Colonic mucosa (tissue), 4 donors: ENCODE measurements at regions of chr10 and their contacts with region 1.

Region 1: GRCh38 chr10:23702977-23703414 is 264.1 kb downstream of the OTUD1 start:
- DNase-seq: peak; percentile 46
- H3K4me3 ChIP-seq: no peak overlapping the region
- H3K27ac ChIP-seq: no peak overlapping the region
- H3K4me1 ChIP-seq: no peaks in the 10 kb centered on the region
- H3K27me3 ChIP-seq: no peaks in the 10 kb centered on the region
- CTCF ChIP-seq: peak; percentile 67

Region 2: DNA sequence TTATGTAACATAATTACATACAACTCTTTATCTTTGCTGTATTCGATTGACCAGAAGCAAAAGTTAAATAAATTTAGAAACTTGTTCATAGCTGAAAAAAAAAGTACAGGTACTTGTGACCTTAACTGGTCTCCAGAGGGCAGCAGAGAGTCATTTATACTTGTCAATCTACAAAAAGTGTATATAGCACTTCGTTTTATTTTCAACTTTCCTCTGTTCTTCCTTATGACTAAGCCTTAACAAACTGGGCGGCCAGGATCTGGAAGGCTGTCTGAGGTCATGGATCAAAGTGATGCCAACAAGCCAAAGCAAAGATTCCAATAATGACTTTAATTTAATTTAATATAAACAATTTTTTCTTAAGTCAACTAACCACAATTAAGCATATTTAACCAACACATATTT is 388.2 kb before region 1 on chr10:
- intact Hi-C with region 1: loop called (anchors 2 kb)
- DNase-seq: peak; percentile 63
- H3K4me3 ChIP-seq: no peak overlapping the region
- H3K27ac ChIP-seq: no peak overlapping the region
- H3K4me1 ChIP-seq: no peaks in the 10 kb centered on the region
- H3K27me3 ChIP-seq: no peaks in the 10 kb centered on the region
- CTCF ChIP-seq: peak; percentile 73

Region 3: DNA sequence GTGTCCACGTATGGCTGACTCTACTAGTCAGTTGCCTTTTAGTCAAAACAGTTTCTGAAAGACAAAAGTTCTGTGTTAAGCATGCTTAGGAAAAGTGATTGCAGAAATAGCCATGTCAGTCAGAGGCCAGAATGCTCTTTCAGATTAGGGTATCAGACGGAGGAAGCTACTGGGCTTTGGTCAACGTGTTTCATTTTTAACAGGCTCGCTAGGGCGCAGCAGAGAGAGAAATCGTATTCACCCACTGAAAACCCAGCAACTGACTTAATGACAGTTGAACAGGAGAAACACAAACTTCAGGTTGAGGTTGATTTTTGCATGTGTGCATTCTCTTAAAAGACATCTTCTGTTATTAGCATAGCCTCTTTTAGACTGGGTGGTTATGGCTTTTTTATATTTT is 183.4 kb after region 1 on chr10:
- intact Hi-C with region 1: no loop called
- DNase-seq: no peak
- H3K4me3 ChIP-seq: no peak overlapping the region
- H3K27ac ChIP-seq: no peak overlapping the region
- H3K4me1 ChIP-seq: no peaks in the 10 kb centered on the region
- H3K27me3 ChIP-seq: no peaks in the 10 kb centered on the region
- CTCF ChIP-seq: no peak